Heart left ventricle (tissue), 16 donors: ENCODE measurements at regions of chr2 and their contacts with region 1.

Region 1: DNA sequence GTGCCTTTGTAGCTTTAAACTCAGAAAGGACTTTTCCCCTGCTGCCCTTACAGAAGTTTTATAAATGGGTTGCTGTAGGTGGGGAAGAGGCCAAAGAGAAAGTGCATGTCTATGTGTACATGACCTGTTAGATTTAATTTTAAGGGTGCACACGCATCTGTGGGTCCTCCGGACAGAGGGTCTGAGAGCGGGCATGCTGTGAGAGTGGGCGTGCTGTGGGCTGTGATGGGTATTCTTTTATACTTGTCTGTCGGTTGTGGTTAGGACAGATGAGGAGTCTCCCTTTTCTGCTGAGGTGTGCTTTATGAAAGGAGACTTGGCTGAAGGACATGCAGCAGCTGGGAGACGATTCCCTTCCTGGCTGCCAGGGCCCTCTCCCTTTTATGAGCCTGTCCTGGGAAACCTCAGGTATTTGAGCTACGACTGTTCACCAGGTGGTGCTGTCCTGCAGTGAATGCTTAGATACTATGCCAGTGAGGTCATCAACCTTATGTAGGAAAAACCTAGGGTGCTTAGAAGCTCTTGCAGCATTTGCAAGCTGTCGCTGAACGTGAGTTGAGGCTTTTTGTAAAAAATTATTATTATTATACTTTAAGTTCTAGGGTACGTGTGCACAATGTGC is 67.5 kb downstream of the TANC1 start:
- DNase-seq: no peak
- ATAC-seq: peak; percentile 39 to 77 (median 72)
- H3K4me3 ChIP-seq: no peak overlapping the region
- H3K27ac ChIP-seq: peak overlapping the region in 9 of 12 donors; percentile 13 to 58 (median 41)
- H3K4me1 ChIP-seq: peaks cover 0 to 51% (median 38%) of the 10 kb centered on the region in 12 donors
- H3K27me3 ChIP-seq: no peaks in the 10 kb centered on the region
- CTCF ChIP-seq: peak in 9 of 12 donors; percentile 10 to 55 (median 33)
- POLR2A ChIP-seq: no peak

Region 2: DNA sequence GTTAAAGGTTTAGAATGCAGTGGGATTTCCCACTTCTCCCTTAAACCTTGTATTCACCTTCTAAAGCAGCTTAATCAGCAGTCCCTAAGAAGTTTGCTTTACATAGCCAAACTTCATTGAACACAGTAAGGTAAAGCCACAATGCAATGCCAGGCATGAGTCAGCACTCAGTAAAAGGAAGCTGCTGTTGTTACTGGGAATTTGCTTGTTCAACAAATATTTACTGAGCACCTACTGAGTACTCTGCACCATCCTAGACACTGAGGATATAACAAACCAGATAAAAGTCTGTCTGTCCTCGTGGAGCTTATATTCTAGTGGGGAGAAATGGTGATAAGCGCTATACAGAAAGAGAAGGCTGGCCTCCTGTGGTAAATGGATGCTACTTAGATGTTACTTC is 416.4 kb before region 1 on chr2:
- intact Hi-C with region 1: no loop called
- DNase-seq: no peak
- ATAC-seq: peak in 1 of 4 donors; percentile 50
- H3K4me3 ChIP-seq: no peak overlapping the region
- H3K27ac ChIP-seq: no peak overlapping the region
- H3K4me1 ChIP-seq: peaks cover 0 to 11% (median 0%) of the 10 kb centered on the region in 12 donors
- H3K27me3 ChIP-seq: no peaks in the 10 kb centered on the region
- CTCF ChIP-seq: no peak
- POLR2A ChIP-seq: no peak

Region 3: GRCh38 chr2:159071190-159071915 is 35.5 kb after region 1 on chr2:
- intact Hi-C with region 1: no loop called
- DNase-seq: no peak
- ATAC-seq: no peak
- H3K4me3 ChIP-seq: no peak overlapping the region
- H3K27ac ChIP-seq: peak overlapping the region in 1 of 12 donors; percentile 6
- H3K4me1 ChIP-seq: peaks cover 0 to 61% (median 21%) of the 10 kb centered on the region in 12 donors
- H3K27me3 ChIP-seq: no peaks in the 10 kb centered on the region
- CTCF ChIP-seq: peak in 1 of 12 donors; percentile 15
- POLR2A ChIP-seq: no peak

Region 4: GRCh38 chr2:159090514-159091201 is 54.8 kb after region 1 on chr2:
- intact Hi-C with region 1: loop called in 1 of 10 experiments (anchors 10 kb)
- DNase-seq: no peak
- ATAC-seq: peak in 3 of 4 donors; percentile 23 to 32 (median 29)
- H3K4me3 ChIP-seq: peak overlapping the region in 1 of 12 donors; percentile 0
- H3K27ac ChIP-seq: peak overlapping the region; percentile 58 to 82 (median 73)
- H3K4me1 ChIP-seq: peaks cover 32 to 100% (median 95%) of the 10 kb centered on the region in 12 donors
- H3K27me3 ChIP-seq: no peaks in the 10 kb centered on the region
- CTCF ChIP-seq: no peak
- POLR2A ChIP-seq: no peak

Region 5: GRCh38 chr2:159111346-159111924 is 75.5 kb after region 1 on chr2:
- intact Hi-C with region 1: loop called in 7 of 10 experiments (anchors 5 kb)
- DNase-seq: peak in 4 of 5 donors; percentile 59 to 80 (median 66)
- ATAC-seq: peak; percentile 76 to 87 (median 85)
- H3K4me3 ChIP-seq: no peak overlapping the region
- H3K27ac ChIP-seq: peak overlapping the region in 9 of 12 donors; percentile 11 to 76 (median 46)
- H3K4me1 ChIP-seq: peaks cover 0 to 74% (median 17%) of the 10 kb centered on the region in 12 donors
- H3K27me3 ChIP-seq: no peaks in the 10 kb centered on the region
- CTCF ChIP-seq: peak in 1 of 12 donors; percentile 15
- POLR2A ChIP-seq: no peak